Heart left ventricle (tissue), 16 donors: ENCODE measurements at regions of chr3 and their contacts with region 1.

Region 1: GRCh38 chr3:168165390-168166269 is 69.9 kb upstream of the GOLIM4 start:
- DNase-seq: peak in 3 of 5 donors; percentile 41 to 66 (median 56)
- ATAC-seq: peak; percentile 48 to 83 (median 72)
- H3K4me3 ChIP-seq: peak overlapping the region in 5 of 12 donors; percentile 11 to 26 (median 23)
- H3K27ac ChIP-seq: peak overlapping the region in 2 of 12 donors; percentile 28 to 46
- H3K4me1 ChIP-seq: peaks cover 0 to 4% (median 0%) of the 10 kb centered on the region in 12 donors
- H3K27me3 ChIP-seq: no peaks in the 10 kb centered on the region
- CTCF ChIP-seq: peak; percentile 59 to 88 (median 80)
- POLR2A ChIP-seq: no peak

Region 2: GRCh38 chr3:166274351-166275023 is 1891.1 kb before region 1 on chr3:
- intact Hi-C with region 1: no loop called
- DNase-seq: no peak
- ATAC-seq: no peak
- H3K4me3 ChIP-seq: no peak overlapping the region
- H3K27ac ChIP-seq: no peak overlapping the region
- H3K4me1 ChIP-seq: no peaks in the 10 kb centered on the region
- H3K27me3 ChIP-seq: no peaks in the 10 kb centered on the region
- CTCF ChIP-seq: no peak
- POLR2A ChIP-seq: no peak

Region 3: GRCh38 chr3:167913219-167913835 is 252.3 kb before region 1 on chr3:
- intact Hi-C with region 1: loop called in 1 of 10 experiments (anchors 10 kb)
- DNase-seq: no peak
- ATAC-seq: peak in 3 of 4 donors; percentile 48 to 72 (median 61)
- H3K4me3 ChIP-seq: no peak overlapping the region
- H3K27ac ChIP-seq: peak overlapping the region in 2 of 12 donors; percentile 19 to 40
- H3K4me1 ChIP-seq: peaks cover 0 to 9% (median 0%) of the 10 kb centered on the region in 12 donors
- H3K27me3 ChIP-seq: no peaks in the 10 kb centered on the region
- CTCF ChIP-seq: peak in 2 of 12 donors; percentile 10 to 21
- POLR2A ChIP-seq: no peak

Region 4: GRCh38 chr3:168047190-168047795 is 118.3 kb before region 1 on chr3:
- intact Hi-C with region 1: loop called (anchors 1 to 2 kb)
- DNase-seq: no peak
- ATAC-seq: peak; percentile 33 to 67 (median 64)
- H3K4me3 ChIP-seq: no peak overlapping the region
- H3K27ac ChIP-seq: no peak overlapping the region
- H3K4me1 ChIP-seq: peaks cover 0 to 62% (median 34%) of the 10 kb centered on the region in 12 donors
- H3K27me3 ChIP-seq: no peaks in the 10 kb centered on the region
- CTCF ChIP-seq: peak; percentile 67 to 96 (median 90)
- POLR2A ChIP-seq: no peak

Region 5: DNA sequence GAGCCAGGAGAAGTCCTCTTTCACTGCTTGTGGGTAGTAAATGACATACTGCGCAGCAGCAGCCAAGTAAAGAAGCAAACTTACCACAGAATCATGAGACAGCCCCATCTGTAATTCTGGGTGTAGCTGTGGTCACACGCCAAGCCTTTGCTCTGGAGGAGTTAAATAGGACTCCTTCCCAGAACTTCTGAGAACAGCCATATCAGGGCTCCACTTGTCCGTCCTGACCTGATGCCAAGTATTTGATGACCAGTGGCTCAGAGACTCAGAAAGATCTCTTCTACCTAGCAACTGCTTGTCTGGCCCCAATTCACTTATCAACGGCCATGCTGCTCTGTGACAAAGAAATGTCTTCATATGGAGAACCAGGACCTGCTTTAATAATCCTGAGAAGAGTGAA is 49.4 kb before region 1 on chr3:
- intact Hi-C with region 1: loop called in 2 of 10 experiments (anchors 5 kb)
- DNase-seq: peak; percentile 58 to 75 (median 65)
- ATAC-seq: peak; percentile 84 to 95 (median 88)
- H3K4me3 ChIP-seq: no peak overlapping the region
- H3K27ac ChIP-seq: peak overlapping the region in 5 of 12 donors; percentile 2 to 18 (median 9)
- H3K4me1 ChIP-seq: peaks cover 0 to 46% (median 5%) of the 10 kb centered on the region in 12 donors
- H3K27me3 ChIP-seq: no peaks in the 10 kb centered on the region
- CTCF ChIP-seq: no peak
- POLR2A ChIP-seq: no peak

Region 6: DNA sequence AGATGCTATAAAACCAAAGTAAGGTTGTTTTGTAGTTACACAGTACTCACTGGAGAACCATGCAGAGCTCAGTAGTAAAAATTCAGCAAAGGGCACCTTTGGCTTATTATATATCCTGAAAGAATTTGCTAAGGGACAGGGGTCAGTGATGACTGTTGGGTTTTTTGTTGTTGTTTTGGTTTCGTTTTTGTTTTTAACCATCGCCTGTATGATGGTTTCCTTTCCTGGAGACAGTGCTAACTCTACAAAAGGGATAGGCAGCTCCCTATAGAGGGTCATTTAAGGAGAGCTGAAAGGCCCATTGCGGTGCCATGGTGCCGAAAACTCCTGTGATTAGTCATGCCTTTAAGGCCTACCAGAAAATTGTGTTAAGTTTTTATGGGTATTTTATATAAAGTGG is 48.3 kb after region 1 on chr3:
- intact Hi-C with region 1: no loop called
- DNase-seq: no peak
- ATAC-seq: no peak
- H3K4me3 ChIP-seq: peak overlapping the region in 1 of 12 donors; percentile 23
- H3K27ac ChIP-seq: no peak overlapping the region
- H3K4me1 ChIP-seq: peaks cover 0 to 4% (median 0%) of the 10 kb centered on the region in 12 donors
- H3K27me3 ChIP-seq: no peaks in the 10 kb centered on the region
- CTCF ChIP-seq: no peak
- POLR2A ChIP-seq: no peak

Region 7: GRCh38 chr3:168545591-168545990 is 380.0 kb after region 1 on chr3:
- intact Hi-C with region 1: no loop called
- DNase-seq: peak in 4 of 5 donors; percentile 41 to 62 (median 50)
- ATAC-seq: peak; percentile 94 to 99 (median 97)
- H3K4me3 ChIP-seq: no peak overlapping the region
- H3K27ac ChIP-seq: no peak overlapping the region
- H3K4me1 ChIP-seq: peaks cover 0 to 5% (median 0%) of the 10 kb centered on the region in 12 donors
- H3K27me3 ChIP-seq: no peaks in the 10 kb centered on the region
- CTCF ChIP-seq: no peak
- POLR2A ChIP-seq: no peak

Region 8: GRCh38 chr3:168952551-168952950 is 786.9 kb after region 1 on chr3:
- intact Hi-C with region 1: no loop called
- DNase-seq: no peak
- ATAC-seq: no peak
- H3K4me3 ChIP-seq: no peak overlapping the region
- H3K27ac ChIP-seq: no peak overlapping the region
- H3K4me1 ChIP-seq: no peaks in the 10 kb centered on the region
- H3K27me3 ChIP-seq: no peaks in the 10 kb centered on the region
- CTCF ChIP-seq: peak in 7 of 12 donors; percentile 11 to 42 (median 25)
- POLR2A ChIP-seq: no peak